ENCODE measurements at regions of chr14 and their contacts with region 1.

Region 1: DNA sequence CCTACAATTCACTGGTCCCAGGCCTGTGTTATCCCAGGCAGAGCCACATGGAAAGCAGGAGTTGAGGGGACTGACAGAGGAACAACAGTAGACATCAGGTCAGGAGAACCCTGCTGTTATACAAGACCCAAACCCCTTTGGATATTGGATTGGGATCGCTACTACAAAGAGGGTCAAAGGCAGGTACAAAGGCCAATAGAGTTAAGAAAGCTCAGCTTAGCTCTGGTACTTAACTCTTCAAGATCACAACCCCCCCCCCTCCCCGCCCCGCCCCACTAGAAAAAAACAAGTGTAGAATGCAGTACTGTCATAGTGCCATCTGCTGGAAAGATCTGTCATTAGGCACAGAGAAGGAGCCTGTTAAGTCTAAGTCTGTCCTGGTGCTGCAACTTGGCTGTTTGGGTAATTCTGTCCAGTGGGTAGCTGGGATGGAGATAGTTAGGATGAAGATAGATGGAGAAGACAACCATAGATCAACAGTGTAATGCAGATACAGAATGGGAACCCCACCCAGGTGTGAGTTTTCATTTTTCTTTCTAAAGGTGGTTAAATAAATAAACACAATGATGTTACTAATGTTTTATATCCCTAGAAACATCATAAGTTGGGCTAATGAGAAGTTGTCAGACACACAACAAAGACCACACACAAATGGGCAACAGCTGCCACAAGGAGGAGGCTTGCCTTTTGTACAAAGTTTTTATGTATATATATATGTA is 17.2 kb downstream of the REM2 start:
- DNase-seq: peak; percentile 45
- H3K4me3 Mint-ChIP-seq: no peak overlapping the region
- H3K27ac Mint-ChIP-seq: peak overlapping the region; percentile 35
- H3K4me1 Mint-ChIP-seq: no peaks in the 10 kb centered on the region
- H3K27me3 Mint-ChIP-seq: no peaks in the 10 kb centered on the region
- CTCF ChIP-seq: peak; percentile 7

Region 2: DNA sequence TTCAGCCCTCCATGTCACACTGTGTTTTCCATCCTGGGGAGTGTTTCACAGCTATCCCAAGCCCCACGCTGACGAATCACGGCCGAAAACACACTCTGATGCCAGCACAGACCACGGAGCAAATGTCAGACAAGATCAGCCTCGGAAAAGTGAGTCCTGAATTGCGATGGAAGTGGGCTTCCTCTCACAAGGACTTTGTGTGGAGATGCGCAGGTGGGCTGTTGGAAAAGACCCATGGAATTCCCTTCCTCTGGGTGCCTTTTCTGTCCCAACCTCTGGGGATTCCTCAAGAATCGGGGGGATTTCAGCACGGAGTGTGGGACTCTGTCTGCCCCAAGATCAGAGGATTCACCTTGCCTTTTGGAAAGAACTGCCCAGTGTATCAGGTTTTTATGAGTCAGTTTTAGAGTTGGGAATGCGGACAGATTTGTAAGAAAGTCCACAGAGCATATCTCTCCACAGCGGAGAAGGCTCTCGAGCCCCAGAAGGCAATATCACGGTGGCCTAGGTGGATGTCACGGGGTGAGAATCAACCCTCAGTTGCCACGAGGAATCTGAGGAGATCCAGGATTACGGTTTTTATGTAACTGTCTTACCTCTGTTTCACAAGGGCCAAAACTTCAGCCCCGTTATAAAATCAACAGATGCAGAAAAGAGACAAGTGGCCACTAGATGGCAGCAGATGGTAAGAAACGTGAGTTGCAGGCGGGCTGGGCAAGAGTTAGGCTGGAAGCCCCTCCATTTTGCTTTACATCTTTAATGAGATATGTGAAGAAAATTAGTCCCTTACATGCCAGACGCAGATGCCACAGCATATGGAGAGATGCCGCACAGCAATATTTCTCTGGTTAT is 513.1 kb before region 1 on chr14:
- CTCF ChIA-PET with region 1: no interaction called
- intact Hi-C with region 1: loop called (anchors 5 kb)
- DNase-seq: peak; percentile 74
- H3K4me3 Mint-ChIP-seq: no peak overlapping the region
- H3K27ac Mint-ChIP-seq: no peak overlapping the region
- H3K4me1 Mint-ChIP-seq: peaks cover 55% of the 10 kb centered on the region
- H3K27me3 Mint-ChIP-seq: no peaks in the 10 kb centered on the region
- CTCF ChIP-seq: peak; percentile 60

Region 3: GRCh38 chr14:22781586-22781991 is 118.7 kb before region 1 on chr14:
- CTCF ChIA-PET with region 1: interaction called, 3 read pairs
- intact Hi-C with region 1: loop called (anchors 1 kb)
- DNase-seq: no peak
- H3K4me3 Mint-ChIP-seq: no peak overlapping the region
- H3K27ac Mint-ChIP-seq: peak overlapping the region; percentile 12
- H3K4me1 Mint-ChIP-seq: peaks cover 12% of the 10 kb centered on the region
- H3K27me3 Mint-ChIP-seq: no peaks in the 10 kb centered on the region
- CTCF ChIP-seq: no peak

Region 4: GRCh38 chr14:22822571-22823098 is 77.6 kb before region 1 on chr14:
- CTCF ChIA-PET with region 1: interaction called, 4 read pairs
- intact Hi-C with region 1: loop called (anchors 1 kb)
- DNase-seq: peak; percentile 87
- H3K4me3 Mint-ChIP-seq: peak overlapping the region; percentile 71
- H3K27ac Mint-ChIP-seq: peak overlapping the region; percentile 94
- H3K4me1 Mint-ChIP-seq: peaks cover 54% of the 10 kb centered on the region
- H3K27me3 Mint-ChIP-seq: no peaks in the 10 kb centered on the region
- CTCF ChIP-seq: peak; percentile 66

Region 5: DNA sequence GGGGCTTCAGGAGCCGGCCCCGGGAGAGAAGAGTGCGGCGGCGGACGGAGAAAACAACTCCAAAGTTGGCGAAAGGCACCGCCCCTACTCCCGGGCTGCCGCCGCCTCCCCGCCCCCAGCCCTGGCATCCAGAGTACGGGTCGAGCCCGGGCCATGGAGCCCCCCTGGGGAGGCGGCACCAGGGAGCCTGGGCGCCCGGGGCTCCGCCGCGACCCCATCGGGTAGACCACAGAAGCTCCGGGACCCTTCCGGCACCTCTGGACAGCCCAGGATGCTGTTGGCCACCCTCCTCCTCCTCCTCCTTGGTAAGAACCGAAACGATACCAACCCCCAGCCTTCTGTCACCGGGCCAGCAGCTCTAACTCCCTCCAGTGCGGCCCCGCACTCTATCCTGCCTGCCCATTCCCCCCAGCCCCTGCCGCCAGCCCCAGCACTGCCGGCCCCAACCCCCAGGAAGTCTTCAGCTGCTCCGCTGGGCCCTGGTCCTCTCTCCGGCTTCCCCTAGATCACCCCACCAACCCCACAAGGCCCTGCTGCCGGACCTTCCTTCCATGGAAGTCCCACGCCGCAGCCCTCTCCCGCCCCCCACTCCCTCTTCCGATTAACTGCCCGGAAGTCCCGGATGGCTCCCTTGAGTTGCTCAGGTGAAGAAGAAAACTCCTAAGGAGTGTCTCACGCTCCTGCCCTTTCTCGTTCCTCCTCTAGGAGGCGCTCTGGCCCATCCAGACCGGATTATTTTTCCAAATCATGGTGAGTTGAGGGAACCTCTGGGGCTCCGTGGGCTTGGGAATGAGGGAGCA is 28.0 kb before region 1 on chr14:
- CTCF ChIA-PET with region 1: interaction called, 6 read pairs
- intact Hi-C with region 1: loop called (anchors 1 kb)
- DNase-seq: peak; percentile 86
- H3K4me3 Mint-ChIP-seq: peak overlapping the region; percentile 80
- H3K27ac Mint-ChIP-seq: peak overlapping the region; percentile 73
- H3K4me1 Mint-ChIP-seq: peaks cover 8% of the 10 kb centered on the region
- H3K27me3 Mint-ChIP-seq: no peaks in the 10 kb centered on the region
- CTCF ChIP-seq: peak; percentile 62

Measured in Calu3 (cell line).